ENCODE measurements at regions of chr13 and their contacts with region 1.

Region 1: DNA sequence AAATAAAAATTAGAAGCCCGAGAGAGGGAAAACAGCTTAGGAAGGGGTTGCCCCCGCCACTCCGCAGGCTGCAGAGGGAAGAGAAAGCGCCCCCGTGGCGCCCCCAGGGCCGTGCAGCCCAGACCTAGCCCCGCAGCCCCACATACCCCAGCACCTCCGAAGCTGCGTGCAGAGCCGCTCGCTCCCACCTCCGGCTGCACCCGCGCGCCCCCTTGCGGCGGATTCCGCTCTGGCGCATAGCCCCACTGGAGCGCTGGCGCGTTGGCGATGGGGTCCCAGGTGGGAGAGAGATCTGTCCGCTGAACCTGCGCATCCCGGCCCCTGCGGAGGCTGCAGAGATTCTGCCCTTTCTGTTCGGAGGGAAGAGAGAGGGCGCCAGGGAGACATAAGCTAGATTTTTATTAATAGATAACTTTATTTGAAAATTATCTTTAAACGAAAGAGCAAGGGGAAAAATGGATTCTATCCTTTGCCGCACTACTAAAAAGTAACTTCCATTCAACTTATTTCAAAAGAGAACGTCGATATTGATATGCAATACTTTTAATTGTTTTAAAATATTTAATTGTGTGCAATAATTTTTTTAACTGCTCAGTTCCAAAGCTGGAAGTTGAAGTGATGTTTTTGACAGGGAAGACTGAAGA is 11.7 kb upstream of the CLN5 start:
- DNase-seq: no peak
- H3K4me3 ChIP-seq: peak overlapping the region; percentile 49
- CTCF ChIP-seq: peak; percentile 100

Region 2: GRCh38 chr13:76667551-76667950 is 312.6 kb before region 1 on chr13:
- CTCF ChIA-PET with region 1: interaction called, 19 read pairs
- POLR2A ChIA-PET with region 1: no interaction called
- DNase-seq: peak; percentile 9
- H3K4me3 ChIP-seq: no peak overlapping the region
- CTCF ChIP-seq: peak; percentile 26

Region 3: DNA sequence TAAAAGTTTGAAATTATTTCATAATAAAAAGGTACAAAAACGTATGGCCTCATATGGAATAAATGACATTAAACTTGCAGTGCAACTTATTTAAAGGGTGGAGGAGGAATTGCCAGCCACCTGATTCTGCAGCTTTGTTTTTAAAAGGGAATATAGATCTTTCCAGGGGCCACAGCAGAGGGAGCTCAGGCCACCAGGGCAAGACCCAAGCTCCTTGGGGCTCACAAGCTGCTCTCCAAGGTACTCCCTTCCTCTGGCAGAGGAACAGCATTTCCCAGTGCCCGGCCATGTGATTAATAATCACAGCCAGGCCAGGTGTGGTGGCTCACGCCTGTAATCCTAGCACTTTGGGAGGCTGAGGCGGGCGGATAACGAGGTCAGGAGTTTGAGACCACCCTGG is 25.7 kb before region 1 on chr13:
- CTCF ChIA-PET with region 1: interaction called, 10 read pairs
- POLR2A ChIA-PET with region 1: no interaction called
- DNase-seq: no peak
- H3K4me3 ChIP-seq: no peak overlapping the region
- CTCF ChIP-seq: no peak

Region 4: GRCh38 chr13:76965759-76966421 is 14.3 kb before region 1 on chr13:
- CTCF ChIA-PET with region 1: interaction called, 93 read pairs
- POLR2A ChIA-PET with region 1: no interaction called
- DNase-seq: peak; percentile 41
- H3K4me3 ChIP-seq: no peak overlapping the region
- CTCF ChIP-seq: no peak

Region 5: GRCh38 chr13:76991796-76992547 is 11.8 kb after region 1 on chr13 and contains the start of gene CLN5:
- CTCF ChIA-PET with region 1: interaction called, 106 read pairs
- POLR2A ChIA-PET with region 1: no interaction called
- DNase-seq: peak; percentile 52
- H3K4me3 ChIP-seq: peak within 1 kb of the TSS; percentile 89
- CTCF ChIP-seq: no peak

Region 6: GRCh38 chr13:77002590-77003190 is 22.5 kb after region 1 on chr13:
- CTCF ChIA-PET with region 1: interaction called, 17 read pairs
- POLR2A ChIA-PET with region 1: interaction called, 3 read pairs
- DNase-seq: no peak
- H3K4me3 ChIP-seq: no peak overlapping the region
- CTCF ChIP-seq: peak; percentile 56

Region 7: GRCh38 chr13:77022341-77022740 is 42.1 kb after region 1 on chr13:
- CTCF ChIA-PET with region 1: interaction called, 17 read pairs
- POLR2A ChIA-PET with region 1: no interaction called
- DNase-seq: no peak
- H3K4me3 ChIP-seq: no peak overlapping the region
- CTCF ChIP-seq: no peak

Region 8: DNA sequence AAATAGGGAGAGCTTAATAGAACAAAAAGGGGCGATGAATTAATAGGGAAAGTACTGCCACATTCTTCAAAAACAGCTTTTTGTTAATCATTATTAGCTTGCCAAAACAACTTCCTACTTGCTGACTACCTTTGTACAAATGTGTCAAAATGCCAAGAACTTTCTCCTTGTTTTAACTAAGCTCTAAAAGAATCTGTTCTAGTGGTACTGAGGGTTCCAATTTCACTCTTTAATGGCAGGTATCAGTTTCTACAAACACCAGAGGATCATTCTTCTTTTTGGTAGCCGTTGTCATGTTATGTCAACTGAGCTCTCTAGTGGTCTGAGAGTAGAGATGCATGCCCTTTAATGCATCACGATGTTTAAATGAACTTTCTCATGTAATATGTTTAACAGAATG is 76.2 kb after region 1 on chr13:
- CTCF ChIA-PET with region 1: no interaction called
- POLR2A ChIA-PET with region 1: no interaction called
- DNase-seq: no peak
- H3K4me3 ChIP-seq: no peak overlapping the region
- CTCF ChIP-seq: no peak

Region 9: GRCh38 chr13:77213644-77214043 is 233.4 kb after region 1 on chr13:
- CTCF ChIA-PET with region 1: no interaction called
- POLR2A ChIA-PET with region 1: no interaction called
- DNase-seq: no peak
- H3K4me3 ChIP-seq: no peak overlapping the region
- CTCF ChIP-seq: no peak

Region 10: GRCh38 chr13:78137404-78138142 is 1157.4 kb after region 1 on chr13:
- CTCF ChIA-PET with region 1: no interaction called
- POLR2A ChIA-PET with region 1: no interaction called
- DNase-seq: peak; percentile 14
- H3K4me3 ChIP-seq: no peak overlapping the region
- CTCF ChIP-seq: peak; percentile 58